ENCODE measurements at regions of chr12 and their contacts with region 1.

Region 1: DNA sequence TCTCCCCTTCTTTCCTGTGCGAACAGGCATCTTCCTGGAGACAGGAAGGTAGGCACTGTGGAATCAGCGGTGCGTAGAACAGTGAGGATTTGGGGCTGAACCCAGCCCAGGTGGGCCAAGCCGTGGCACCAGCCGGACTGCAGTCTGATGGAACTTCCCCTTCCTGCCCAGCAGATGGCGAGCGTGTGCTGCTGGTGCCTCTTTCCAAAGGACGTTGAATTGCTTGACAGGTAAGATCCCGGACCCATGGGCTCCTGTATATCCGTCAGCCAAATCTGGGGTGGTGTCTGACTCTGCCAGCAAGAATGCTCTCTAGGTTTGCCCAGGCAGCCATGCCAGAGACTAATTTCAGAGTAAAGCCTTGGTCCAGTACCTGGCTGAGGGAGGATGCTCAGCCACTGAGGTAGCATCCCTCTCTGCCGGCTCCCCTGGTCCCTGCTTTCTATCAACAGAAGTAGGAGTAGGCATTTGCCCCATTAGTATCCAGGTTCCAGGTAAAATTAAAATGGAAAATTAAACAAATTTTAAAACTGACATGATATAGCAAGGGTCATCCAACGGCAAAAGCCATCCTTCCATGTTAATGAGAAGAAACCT is 21.1 kb upstream of the KCNA5 start:
- DNase-seq: peak; percentile 78
- ATAC-seq: peak; percentile 60
- H3K4me3 ChIP-seq: no peak overlapping the region
- H3K4me3 Mint-ChIP-seq: no peak overlapping the region
- H3K27ac ChIP-seq: no peak overlapping the region
- H3K27ac Mint-ChIP-seq: no peak overlapping the region
- H3K4me1 ChIP-seq: no peaks in the 10 kb centered on the region
- H3K4me1 Mint-ChIP-seq: no peaks in the 10 kb centered on the region
- H3K27me3 ChIP-seq: peaks cover 0 to 5% (median 1%) of the 10 kb centered on the region in 4 experiments
- H3K27me3 Mint-ChIP-seq: peaks cover 49% of the 10 kb centered on the region
- CTCF ChIP-seq: peak; percentile 97

Region 2: DNA sequence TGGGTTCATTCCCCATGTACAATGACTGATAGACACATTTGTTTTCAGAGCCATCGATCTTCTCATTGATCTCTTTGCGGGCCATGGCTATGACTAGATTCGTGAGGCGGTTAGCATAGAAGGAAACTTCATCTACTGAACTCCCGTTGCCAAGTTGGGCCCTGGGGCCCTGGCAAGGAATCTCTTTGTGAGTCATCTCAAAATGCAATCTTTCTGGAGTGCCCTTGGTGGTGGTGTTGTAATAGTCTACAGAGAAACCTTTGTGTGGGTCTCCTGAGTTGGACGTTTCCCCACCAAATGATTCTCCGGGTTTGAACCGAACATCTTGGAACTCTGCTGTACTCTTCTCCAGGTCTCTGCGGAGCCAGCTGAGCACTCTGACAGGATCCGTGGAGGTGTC is 394.2 kb before region 1 on chr12:
- CTCF ChIA-PET with region 1: no interaction called
- POLR2A ChIA-PET with region 1: no interaction called
- intact Hi-C with region 1: no loop called
- DNase-seq: no peak
- ATAC-seq: no peak
- H3K4me3 ChIP-seq: no peak overlapping the region
- H3K4me3 Mint-ChIP-seq: no peak overlapping the region
- H3K27ac ChIP-seq: no peak overlapping the region
- H3K27ac Mint-ChIP-seq: no peak overlapping the region
- H3K4me1 ChIP-seq: no peaks in the 10 kb centered on the region
- H3K4me1 Mint-ChIP-seq: no peaks in the 10 kb centered on the region
- H3K27me3 ChIP-seq: no peaks in the 10 kb centered on the region
- H3K27me3 Mint-ChIP-seq: peaks cover 4% of the 10 kb centered on the region
- CTCF ChIP-seq: no peak

Region 3: GRCh38 chr12:4934407-4935035 is 88.0 kb before region 1 on chr12:
- CTCF ChIA-PET with region 1: no interaction called
- POLR2A ChIA-PET with region 1: no interaction called
- intact Hi-C with region 1: no loop called
- DNase-seq: no peak
- ATAC-seq: no peak
- H3K4me3 ChIP-seq: no peak overlapping the region
- H3K4me3 Mint-ChIP-seq: no peak overlapping the region
- H3K27ac ChIP-seq: no peak overlapping the region
- H3K27ac Mint-ChIP-seq: no peak overlapping the region
- H3K4me1 ChIP-seq: no peaks in the 10 kb centered on the region
- H3K4me1 Mint-ChIP-seq: no peaks in the 10 kb centered on the region
- H3K27me3 ChIP-seq: peaks cover 0 to 21% (median 13%) of the 10 kb centered on the region in 4 experiments
- H3K27me3 Mint-ChIP-seq: peaks cover 62% of the 10 kb centered on the region
- CTCF ChIP-seq: no peak

Region 4: DNA sequence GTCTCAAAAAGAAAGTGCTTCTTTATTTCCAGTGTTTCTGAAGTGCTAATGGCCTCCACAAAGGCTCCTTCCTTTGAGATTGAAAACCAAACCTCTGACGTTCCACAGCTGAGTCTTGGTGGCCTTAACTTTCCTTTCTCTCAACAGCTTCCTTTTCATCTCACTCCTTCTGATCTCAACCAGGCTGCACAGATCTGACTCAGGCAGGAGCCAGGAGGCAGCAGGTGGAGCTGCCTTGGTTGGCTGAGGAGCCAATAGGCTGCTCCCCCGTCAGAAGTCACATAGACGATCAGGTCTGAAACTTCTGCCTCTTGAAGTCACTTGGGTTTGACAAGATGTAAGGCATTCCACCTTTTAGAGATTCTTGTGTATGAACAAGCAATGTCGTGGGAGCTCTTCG is 12.0 kb after region 1 on chr12:
- CTCF ChIA-PET with region 1: interaction called, 10 read pairs
- POLR2A ChIA-PET with region 1: no interaction called
- intact Hi-C with region 1: no loop called
- DNase-seq: no peak
- ATAC-seq: no peak
- H3K4me3 ChIP-seq: no peak overlapping the region
- H3K4me3 Mint-ChIP-seq: no peak overlapping the region
- H3K27ac ChIP-seq: no peak overlapping the region
- H3K27ac Mint-ChIP-seq: no peak overlapping the region
- H3K4me1 ChIP-seq: no peaks in the 10 kb centered on the region
- H3K4me1 Mint-ChIP-seq: no peaks in the 10 kb centered on the region
- H3K27me3 ChIP-seq: peaks cover 0 to 5% (median 0%) of the 10 kb centered on the region in 4 experiments
- H3K27me3 Mint-ChIP-seq: peaks cover 23% of the 10 kb centered on the region
- CTCF ChIP-seq: no peak

Region 5: DNA sequence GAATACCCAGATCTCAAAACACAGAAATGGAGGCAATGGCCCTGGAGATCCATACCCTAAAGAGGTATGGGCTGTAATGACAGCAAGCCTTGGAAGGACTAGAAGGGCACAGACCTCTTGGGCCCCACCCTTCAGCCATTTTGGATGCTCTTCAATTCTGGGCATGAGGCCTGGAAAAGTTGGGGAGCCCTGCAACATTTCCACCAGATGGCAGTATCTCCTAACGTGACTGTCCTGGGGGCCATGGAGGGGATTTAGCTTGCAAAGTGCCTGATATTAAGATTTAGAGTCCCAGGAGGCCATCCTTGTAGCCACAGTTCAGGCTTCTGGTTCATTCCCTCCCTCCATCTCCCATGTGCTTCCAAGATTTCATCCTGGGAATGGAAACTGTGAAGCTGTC is 51.3 kb after region 1 on chr12:
- CTCF ChIA-PET with region 1: interaction called, 23 read pairs
- POLR2A ChIA-PET with region 1: no interaction called
- intact Hi-C with region 1: no loop called
- DNase-seq: no peak
- ATAC-seq: no peak
- H3K4me3 ChIP-seq: no peak overlapping the region
- H3K4me3 Mint-ChIP-seq: no peak overlapping the region
- H3K27ac ChIP-seq: no peak overlapping the region
- H3K27ac Mint-ChIP-seq: no peak overlapping the region
- H3K4me1 ChIP-seq: no peaks in the 10 kb centered on the region
- H3K4me1 Mint-ChIP-seq: peaks cover 2% of the 10 kb centered on the region
- H3K27me3 ChIP-seq: peaks cover 0 to 2% (median 0%) of the 10 kb centered on the region in 4 experiments
- H3K27me3 Mint-ChIP-seq: peaks cover 20% of the 10 kb centered on the region
- CTCF ChIP-seq: no peak

Region 6: GRCh38 chr12:5083955-5084849 is 61.6 kb after region 1 on chr12:
- CTCF ChIA-PET with region 1: interaction called, 327 read pairs
- POLR2A ChIA-PET with region 1: no interaction called
- intact Hi-C with region 1: no loop called
- DNase-seq: peak; percentile 78
- ATAC-seq: peak; percentile 56
- H3K4me3 ChIP-seq: no peak overlapping the region
- H3K4me3 Mint-ChIP-seq: no peak overlapping the region
- H3K27ac ChIP-seq: no peak overlapping the region
- H3K27ac Mint-ChIP-seq: no peak overlapping the region
- H3K4me1 ChIP-seq: no peaks in the 10 kb centered on the region
- H3K4me1 Mint-ChIP-seq: no peaks in the 10 kb centered on the region
- H3K27me3 ChIP-seq: no peaks in the 10 kb centered on the region
- H3K27me3 Mint-ChIP-seq: peaks cover 24% of the 10 kb centered on the region
- CTCF ChIP-seq: peak; percentile 92

Region 7: DNA sequence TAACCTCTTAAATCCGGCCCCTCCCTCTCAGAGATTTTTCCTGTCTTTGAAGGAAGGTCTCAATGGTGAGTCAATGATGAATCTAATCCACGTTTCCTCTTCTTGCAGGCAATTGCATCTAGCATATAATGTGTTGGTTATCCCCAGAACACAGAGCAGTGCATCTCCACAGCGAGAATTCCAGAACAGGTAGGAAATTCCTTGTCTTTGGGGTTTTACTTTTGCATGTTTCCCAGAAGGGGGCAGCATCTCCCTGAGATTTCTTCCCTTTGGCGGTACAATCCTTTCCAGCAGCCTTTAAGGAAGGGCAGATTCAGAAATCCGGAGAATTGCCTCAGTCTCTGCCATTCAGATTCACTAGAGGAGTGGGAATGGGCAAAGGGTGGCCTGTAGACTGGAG is 149.1 kb after region 1 on chr12:
- CTCF ChIA-PET with region 1: no interaction called
- POLR2A ChIA-PET with region 1: no interaction called
- intact Hi-C with region 1: no loop called
- DNase-seq: no peak
- ATAC-seq: no peak
- H3K4me3 ChIP-seq: no peak overlapping the region
- H3K4me3 Mint-ChIP-seq: no peak overlapping the region
- H3K27ac ChIP-seq: no peak overlapping the region
- H3K27ac Mint-ChIP-seq: no peak overlapping the region
- H3K4me1 ChIP-seq: no peaks in the 10 kb centered on the region
- H3K4me1 Mint-ChIP-seq: no peaks in the 10 kb centered on the region
- H3K27me3 ChIP-seq: peaks cover 0 to 2% (median 0%) of the 10 kb centered on the region in 4 experiments
- H3K27me3 Mint-ChIP-seq: peaks cover 27% of the 10 kb centered on the region
- CTCF ChIP-seq: no peak

Region 8: GRCh38 chr12:5511644-5512600 is 489.4 kb after region 1 on chr12:
- CTCF ChIA-PET with region 1: no interaction called
- POLR2A ChIA-PET with region 1: no interaction called
- intact Hi-C with region 1: loop called (anchors 5 kb)
- DNase-seq: peak; percentile 42
- ATAC-seq: no peak
- H3K4me3 ChIP-seq: no peak overlapping the region
- H3K4me3 Mint-ChIP-seq: no peak overlapping the region
- H3K27ac ChIP-seq: no peak overlapping the region
- H3K27ac Mint-ChIP-seq: no peak overlapping the region
- H3K4me1 ChIP-seq: peaks cover 0 to 3% of the 10 kb centered on the region in 2 donors
- H3K4me1 Mint-ChIP-seq: no peaks in the 10 kb centered on the region
- H3K27me3 ChIP-seq: peaks cover 0 to 5% (median 1%) of the 10 kb centered on the region in 4 experiments
- H3K27me3 Mint-ChIP-seq: peaks cover 18% of the 10 kb centered on the region
- CTCF ChIP-seq: peak; percentile 45